CD14-positive monocyte (primary cell): ENCODE measurements at regions of chr6 and their contacts with region 1.

Region 1: GRCh38 chr6:53199156-53199555 is 50.5 kb upstream of the GCM1 start:
- DNase-seq: peak; percentile 30 to 42 (median 32)
- H3K4me3 ChIP-seq: peak overlapping the region in 1 of 3 experiments; percentile 11
- H3K4me3 Mint-ChIP-seq: peak overlapping the region in 1 of 2 donors; percentile 73
- H3K27ac ChIP-seq: peak overlapping the region in 1 of 2 donors; percentile 78
- H3K27ac Mint-ChIP-seq: peak overlapping the region; percentile 7 to 82 (median 58)
- H3K4me1 ChIP-seq: peaks cover 43% of the 10 kb centered on the region in 2 donors
- H3K4me1 Mint-ChIP-seq: peaks cover 47% of the 10 kb centered on the region
- H3K27me3 ChIP-seq: no peaks in the 10 kb centered on the region
- H3K27me3 Mint-ChIP-seq: peaks cover 0 to 1% (median 0%) of the 10 kb centered on the region in 3 donors
- CTCF ChIP-seq: no peak

Region 2: GRCh38 chr6:52725535-52726192 is 473.5 kb before region 1 on chr6:
- intact Hi-C with region 1: no loop called
- DNase-seq: no peak
- H3K4me3 ChIP-seq: no peak overlapping the region
- H3K4me3 Mint-ChIP-seq: no peak overlapping the region
- H3K27ac ChIP-seq: no peak overlapping the region
- H3K27ac Mint-ChIP-seq: peak overlapping the region in 1 of 7 donors; percentile 12
- H3K4me1 ChIP-seq: no peaks in the 10 kb centered on the region
- H3K4me1 Mint-ChIP-seq: no peaks in the 10 kb centered on the region
- H3K27me3 ChIP-seq: no peaks in the 10 kb centered on the region
- H3K27me3 Mint-ChIP-seq: peaks cover 0 to 6% (median 4%) of the 10 kb centered on the region in 3 donors
- CTCF ChIP-seq: no peak

Region 3: GRCh38 chr6:53239526-53239925 is 40.4 kb after region 1 on chr6:
- intact Hi-C with region 1: loop called in 1 of 2 experiments (anchors 5 kb)
- DNase-seq: no peak
- H3K4me3 ChIP-seq: no peak overlapping the region
- H3K4me3 Mint-ChIP-seq: no peak overlapping the region
- H3K27ac ChIP-seq: peak overlapping the region in 1 of 2 donors; percentile 86
- H3K27ac Mint-ChIP-seq: peak overlapping the region in 1 of 7 donors; percentile 32
- H3K4me1 ChIP-seq: peaks cover 46 to 64% of the 10 kb centered on the region in 2 donors
- H3K4me1 Mint-ChIP-seq: peaks cover 62% of the 10 kb centered on the region
- H3K27me3 ChIP-seq: no peaks in the 10 kb centered on the region
- H3K27me3 Mint-ChIP-seq: peaks cover 0 to 2% (median 0%) of the 10 kb centered on the region in 3 donors
- CTCF ChIP-seq: no peak

Region 4: DNA sequence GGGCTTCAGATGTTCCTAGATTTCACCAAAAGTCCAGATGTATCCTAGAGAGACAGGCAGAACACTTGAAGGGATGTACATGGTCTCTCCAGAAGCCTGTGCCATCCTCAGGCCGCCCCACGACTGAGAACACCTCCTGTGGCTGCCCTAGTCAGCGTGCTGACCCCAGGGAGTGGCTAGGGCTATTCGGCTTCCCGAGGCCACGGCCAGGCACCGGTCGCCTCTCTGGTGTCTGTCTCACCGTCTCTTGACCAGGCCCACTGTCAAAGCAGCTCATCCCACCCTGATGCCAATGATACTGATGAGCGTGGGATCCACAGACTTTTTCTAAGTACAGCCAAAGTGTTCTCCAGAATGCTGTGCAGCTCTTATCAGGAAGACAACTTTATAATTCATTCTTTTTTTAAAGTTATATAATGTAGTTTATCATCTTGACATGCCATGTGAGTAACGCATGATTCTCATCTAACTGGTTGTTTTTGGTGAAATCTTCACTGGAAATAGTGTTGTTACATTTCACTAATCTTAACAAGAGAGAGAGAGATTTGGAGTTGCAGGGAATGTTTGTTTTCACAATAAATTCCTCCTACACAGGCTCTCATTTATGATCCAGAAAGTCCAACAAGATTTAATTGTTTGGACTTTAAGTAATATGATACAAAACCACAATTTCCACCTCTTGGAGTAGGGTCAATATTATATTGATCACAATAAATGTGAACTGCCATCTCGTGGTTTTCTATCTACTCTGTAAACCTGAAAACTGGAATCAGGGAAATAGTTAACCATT is 508.1 kb after region 1 on chr6:
- intact Hi-C with region 1: no loop called
- DNase-seq: no peak
- H3K4me3 ChIP-seq: no peak overlapping the region
- H3K4me3 Mint-ChIP-seq: no peak overlapping the region
- H3K27ac ChIP-seq: no peak overlapping the region
- H3K27ac Mint-ChIP-seq: no peak overlapping the region
- H3K4me1 ChIP-seq: peaks cover 8 to 11% of the 10 kb centered on the region in 2 donors
- H3K4me1 Mint-ChIP-seq: peaks cover 10% of the 10 kb centered on the region
- H3K27me3 ChIP-seq: no peaks in the 10 kb centered on the region
- H3K27me3 Mint-ChIP-seq: peaks cover 0 to 2% (median 1%) of the 10 kb centered on the region in 3 donors
- CTCF ChIP-seq: no peak

Region 5: DNA sequence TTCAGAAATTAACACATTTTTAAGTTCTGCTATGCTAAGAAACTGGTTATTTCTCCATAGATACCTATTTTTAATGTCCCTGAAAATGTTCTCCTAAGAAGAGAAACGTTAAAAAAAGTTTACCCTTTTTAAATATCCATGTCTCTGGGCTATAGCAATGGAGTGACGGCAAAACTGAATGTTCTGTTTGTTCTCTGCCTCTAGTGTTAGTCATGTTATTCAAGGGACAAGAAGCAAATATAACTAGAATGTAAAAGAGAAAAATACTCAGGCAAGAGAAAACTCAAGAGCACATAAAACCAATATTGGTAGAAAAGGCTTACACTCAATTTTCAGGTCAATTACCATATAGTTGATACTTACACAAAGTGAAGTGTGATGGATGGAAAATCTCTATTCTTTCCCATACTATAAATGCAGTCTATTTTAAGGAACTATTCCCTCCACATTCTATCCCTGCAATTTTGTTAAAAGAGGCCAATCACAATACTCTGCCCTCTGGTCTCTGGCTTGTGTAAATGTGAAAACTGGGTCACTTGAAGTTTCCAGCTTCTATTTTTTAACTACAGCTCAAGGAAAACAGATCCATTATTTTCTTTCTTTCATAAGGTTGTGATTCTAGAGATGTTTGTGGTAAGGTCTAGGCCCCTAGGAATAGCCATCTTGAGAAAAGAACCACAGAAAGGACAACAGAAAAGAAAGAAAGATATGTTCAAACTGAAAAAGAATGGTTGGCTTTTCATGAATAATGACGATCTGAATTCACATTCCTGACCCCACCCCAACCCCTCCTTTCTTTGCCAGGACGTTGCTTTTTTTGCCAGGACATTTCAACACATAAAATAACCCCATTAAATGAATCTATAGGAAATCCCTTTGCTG is 1447.2 kb after region 1 on chr6:
- intact Hi-C with region 1: no loop called
- DNase-seq: no peak
- H3K4me3 ChIP-seq: no peak overlapping the region
- H3K4me3 Mint-ChIP-seq: no peak overlapping the region
- H3K27ac ChIP-seq: no peak overlapping the region
- H3K27ac Mint-ChIP-seq: no peak overlapping the region
- H3K4me1 ChIP-seq: no peaks in the 10 kb centered on the region
- H3K4me1 Mint-ChIP-seq: no peaks in the 10 kb centered on the region
- H3K27me3 ChIP-seq: no peaks in the 10 kb centered on the region
- H3K27me3 Mint-ChIP-seq: no peaks in the 10 kb centered on the region
- CTCF ChIP-seq: no peak